ENCODE measurements at regions of chr2 and their contacts with region 1.

Region 1: DNA sequence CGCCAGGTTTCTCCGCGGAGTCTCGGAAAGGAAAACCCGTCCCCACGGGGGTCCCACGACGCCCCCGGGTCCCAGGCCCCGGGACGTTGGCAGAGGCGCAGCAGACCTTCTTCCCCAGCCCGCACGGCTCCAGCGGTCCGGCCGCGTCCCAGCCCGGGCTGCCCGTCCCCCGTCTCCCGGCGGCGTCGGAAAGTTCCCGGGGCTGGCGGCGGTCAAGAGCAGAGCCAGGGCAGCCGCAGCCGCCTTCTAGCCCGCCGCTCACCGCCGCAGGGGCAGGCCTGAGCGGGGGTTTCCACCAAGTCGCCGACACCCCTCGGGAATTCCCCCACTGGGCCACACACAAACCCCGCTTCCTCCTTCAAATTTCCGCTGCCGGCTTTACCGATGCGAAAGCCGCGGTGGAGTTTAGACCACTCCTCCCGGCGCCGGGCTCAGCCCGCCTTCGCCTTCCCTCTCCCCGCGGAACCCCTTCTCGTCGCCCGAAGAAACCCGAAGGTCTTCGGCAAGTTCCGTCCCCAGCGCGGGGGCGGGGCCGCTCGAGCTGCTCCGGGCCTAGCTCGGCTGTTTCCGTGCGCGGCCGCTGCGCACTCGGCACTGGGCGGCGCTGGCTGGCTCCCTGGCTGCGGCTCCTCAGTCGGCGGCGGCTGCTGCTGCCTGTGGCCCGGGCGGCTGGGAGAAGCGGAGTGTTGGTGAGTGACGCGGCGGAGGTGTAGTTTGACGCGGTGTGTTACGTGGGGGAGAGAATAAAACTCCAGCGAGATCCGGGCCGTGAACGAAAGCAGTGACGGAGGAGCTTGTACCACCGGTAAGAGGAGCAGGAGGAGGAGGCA is at the start of gene CREB1:
- DNase-seq: peak; percentile 98
- H3K4me3 ChIP-seq: peak within 1 kb of the TSS; percentile 86
- H3K27ac ChIP-seq: peak within 1 kb of the TSS; percentile 98
- H3K4me1 ChIP-seq: peaks cover 17% of the 10 kb centered on the region
- H3K27me3 ChIP-seq: no peaks in the 10 kb centered on the region
- CTCF ChIP-seq: no peak
- total RNA-seq, gene CREB1: 67.7 and 78.5 TPM in 2 replicates

Region 2: DNA sequence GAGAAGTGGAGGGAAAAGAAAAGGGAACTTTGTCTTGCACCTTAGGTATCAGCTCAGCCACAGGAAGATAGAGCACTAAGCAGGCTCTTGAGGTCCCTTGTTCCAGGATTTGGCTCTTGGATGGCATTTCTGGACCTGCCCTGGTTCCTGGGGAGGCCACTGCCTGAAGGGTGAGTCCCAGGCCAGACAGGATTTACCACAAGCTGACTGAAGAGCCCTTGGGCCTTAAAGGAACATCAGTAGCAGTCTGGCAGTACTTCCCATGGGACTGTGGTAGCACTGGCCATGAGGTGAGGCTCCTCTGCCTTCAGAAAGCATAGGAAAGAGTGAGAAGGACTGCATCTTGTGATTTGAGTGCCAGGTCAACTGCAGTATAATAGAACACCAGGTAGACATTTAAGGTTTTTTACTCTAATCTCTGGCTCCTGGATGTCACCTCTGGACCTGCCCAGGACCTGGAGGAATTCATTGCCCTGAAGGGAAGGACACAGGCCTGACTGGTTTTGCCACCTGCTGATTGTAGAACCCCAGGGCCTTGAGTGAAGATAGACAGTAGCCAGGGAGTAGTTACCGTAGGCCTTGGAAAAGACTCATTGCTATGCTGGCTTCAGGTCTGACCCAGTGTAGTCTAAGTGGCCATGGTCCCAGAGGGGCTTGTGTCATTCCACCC is 154.2 kb before region 1 on chr2:
- CTCF ChIA-PET with region 1: no interaction called
- POLR2A ChIA-PET with region 1: no interaction called
- intact Hi-C with region 1: no loop called
- DNase-seq: no peak
- H3K4me3 ChIP-seq: no peak overlapping the region
- H3K27ac ChIP-seq: no peak overlapping the region
- H3K4me1 ChIP-seq: no peaks in the 10 kb centered on the region
- H3K27me3 ChIP-seq: no peaks in the 10 kb centered on the region
- CTCF ChIP-seq: no peak

Region 3: DNA sequence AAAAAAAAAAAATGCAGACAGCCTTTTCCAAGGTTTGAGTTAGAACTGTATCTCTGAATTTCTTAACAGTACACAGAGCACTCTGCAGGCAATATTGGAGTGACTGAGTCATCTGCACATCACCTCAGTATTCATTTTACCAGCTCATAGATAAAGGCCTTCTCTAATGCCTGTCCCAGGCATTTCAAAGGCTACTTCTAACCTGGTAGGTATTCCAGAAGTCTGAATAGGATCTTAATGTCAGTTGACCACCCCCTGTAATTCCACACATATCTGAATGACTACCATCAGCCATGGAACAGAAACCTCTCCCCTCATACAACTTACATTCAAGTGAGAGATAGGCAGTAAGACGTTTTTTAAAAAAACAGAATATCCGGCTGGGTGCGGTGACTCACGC is 86.6 kb after region 1 on chr2:
- CTCF ChIA-PET with region 1: no interaction called
- POLR2A ChIA-PET with region 1: no interaction called
- intact Hi-C with region 1: no loop called
- DNase-seq: no peak
- H3K4me3 ChIP-seq: no peak overlapping the region
- H3K27ac ChIP-seq: no peak overlapping the region
- H3K4me1 ChIP-seq: no peaks in the 10 kb centered on the region
- H3K27me3 ChIP-seq: no peaks in the 10 kb centered on the region
- CTCF ChIP-seq: no peak

Region 4: GRCh38 chr2:207777124-207777523 is 247.6 kb after region 1 on chr2:
- CTCF ChIA-PET with region 1: no interaction called
- POLR2A ChIA-PET with region 1: interaction called, 14 read pairs
- intact Hi-C with region 1: no loop called
- DNase-seq: no peak
- H3K4me3 ChIP-seq: no peak overlapping the region
- H3K27ac ChIP-seq: no peak overlapping the region
- H3K4me1 ChIP-seq: peaks cover 3% of the 10 kb centered on the region
- H3K27me3 ChIP-seq: no peaks in the 10 kb centered on the region
- CTCF ChIP-seq: no peak

Measured in A673 (cell line).